Sigmoid colon (tissue), 7 donors: ENCODE measurements at regions of chr14 and their contacts with region 1.

Region 1: GRCh38 chr14:68816262-68816942 is 23.5 kb upstream of the ZFP36L1 start:
- DNase-seq: peak; percentile 96
- H3K4me3 ChIP-seq: peak overlapping the region; percentile 35 to 52 (median 50)
- H3K27ac ChIP-seq: peak overlapping the region; percentile 93 to 99 (median 96)
- H3K4me1 ChIP-seq: peaks cover 0 to 77% (median 69%) of the 10 kb centered on the region in 4 donors
- H3K27me3 ChIP-seq: no peaks in the 10 kb centered on the region
- CTCF ChIP-seq: peak; percentile 92 to 99 (median 98)
- EP300 ChIP-seq: peak in 1 of 4 donors; percentile 47
- POLR2A ChIP-seq: peak; percentile 15 to 38

Region 2: GRCh38 chr14:67883717-67884116 is 932.7 kb before region 1 on chr14:
- intact Hi-C with region 1: loop called (anchors 5 kb)
- DNase-seq: no peak
- H3K4me3 ChIP-seq: no peak overlapping the region
- H3K27ac ChIP-seq: no peak overlapping the region
- H3K4me1 ChIP-seq: peaks cover 0 to 7% (median 3%) of the 10 kb centered on the region in 4 donors
- H3K27me3 ChIP-seq: no peaks in the 10 kb centered on the region
- CTCF ChIP-seq: peak in 1 of 4 experiments; percentile 10
- EP300 ChIP-seq: no peak
- POLR2A ChIP-seq: no peak

Region 3: DNA sequence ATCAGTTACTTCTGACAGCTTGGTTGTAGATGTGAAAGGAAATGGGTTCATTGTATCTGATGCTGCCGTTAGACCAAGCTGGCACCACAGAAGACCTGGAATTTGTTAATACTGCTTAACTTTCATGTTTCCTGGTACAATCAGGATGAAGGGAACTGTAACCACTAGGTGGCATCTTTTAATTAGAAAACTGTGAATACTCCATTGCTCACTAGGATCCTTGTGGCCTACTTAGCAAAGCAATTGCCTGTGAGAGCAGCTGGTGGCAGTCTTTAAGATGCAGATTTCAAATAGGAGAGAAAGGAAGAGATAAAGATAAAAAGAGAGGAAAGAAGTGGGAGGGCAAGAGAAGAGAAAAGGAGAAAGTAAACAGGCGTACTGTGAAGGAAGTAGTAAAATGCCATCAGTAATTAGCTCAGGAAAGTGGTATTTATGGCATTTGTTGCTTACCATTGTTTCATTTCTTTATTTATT is 882.4 kb before region 1 on chr14:
- intact Hi-C with region 1: loop called (anchors 2 kb)
- DNase-seq: no peak
- H3K4me3 ChIP-seq: no peak overlapping the region
- H3K27ac ChIP-seq: peak overlapping the region; percentile 44 to 79 (median 66)
- H3K4me1 ChIP-seq: peaks cover 0 to 32% (median 17%) of the 10 kb centered on the region in 4 donors
- H3K27me3 ChIP-seq: no peaks in the 10 kb centered on the region
- CTCF ChIP-seq: peak; percentile 71 to 90 (median 86)
- EP300 ChIP-seq: no peak
- POLR2A ChIP-seq: no peak

Region 4: GRCh38 chr14:68039593-68039992 is 776.8 kb before region 1 on chr14:
- intact Hi-C with region 1: loop called (anchors 10 kb)
- DNase-seq: no peak
- H3K4me3 ChIP-seq: no peak overlapping the region
- H3K27ac ChIP-seq: peak overlapping the region; percentile 22 to 90 (median 85)
- H3K4me1 ChIP-seq: peaks cover 0 to 92% (median 61%) of the 10 kb centered on the region in 4 donors
- H3K27me3 ChIP-seq: no peaks in the 10 kb centered on the region
- CTCF ChIP-seq: no peak
- EP300 ChIP-seq: no peak
- POLR2A ChIP-seq: no peak

Region 5: DNA sequence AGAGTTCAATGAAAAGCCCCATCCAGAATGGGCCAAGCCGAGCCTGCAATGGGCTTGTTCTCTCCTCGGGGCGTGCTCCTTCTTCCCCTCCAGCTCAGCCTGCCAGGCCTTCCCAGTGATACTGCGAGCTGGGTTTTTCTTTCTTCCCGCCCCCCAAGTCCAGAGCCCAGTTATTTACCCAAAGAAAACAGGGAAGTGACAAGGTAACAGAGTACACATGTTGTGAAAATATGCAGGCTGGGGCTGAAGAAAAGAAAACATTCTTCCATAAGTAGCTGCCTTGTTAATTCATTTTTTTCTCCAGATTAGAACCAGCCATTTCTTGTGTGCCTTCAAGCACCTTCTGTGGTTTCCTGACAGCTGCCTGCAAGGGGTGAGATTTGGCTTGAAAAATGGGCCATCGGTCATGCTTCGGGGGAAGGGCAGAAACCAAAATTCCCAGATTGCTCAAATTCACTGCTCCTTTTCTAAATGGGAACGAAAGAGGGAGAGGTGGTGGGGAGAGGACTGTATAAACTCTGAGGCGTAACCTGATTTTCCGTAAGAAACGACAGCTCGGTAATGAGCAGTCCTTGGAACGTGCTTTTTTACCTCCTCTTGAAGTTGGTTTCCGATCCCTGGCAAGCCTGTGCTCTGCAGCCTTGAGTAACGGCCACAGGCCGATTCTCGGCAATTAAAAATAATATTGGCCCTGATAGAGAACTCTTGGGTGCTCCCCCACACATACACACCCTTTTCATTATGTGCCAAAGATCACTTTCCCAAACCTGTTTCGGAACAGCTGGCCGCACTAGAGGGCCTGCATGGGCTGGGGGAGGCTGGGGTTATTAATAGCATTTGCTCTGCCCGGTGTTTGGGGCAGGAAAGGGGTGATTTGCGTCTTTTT is 252.9 kb before region 1 on chr14:
- intact Hi-C with region 1: no loop called
- DNase-seq: no peak
- H3K4me3 ChIP-seq: no peak overlapping the region
- H3K27ac ChIP-seq: peak overlapping the region; percentile 56 to 63 (median 62)
- H3K4me1 ChIP-seq: peaks cover 0 to 44% (median 27%) of the 10 kb centered on the region in 4 donors
- H3K27me3 ChIP-seq: no peaks in the 10 kb centered on the region
- CTCF ChIP-seq: no peak
- EP300 ChIP-seq: no peak
- POLR2A ChIP-seq: no peak

Region 6: DNA sequence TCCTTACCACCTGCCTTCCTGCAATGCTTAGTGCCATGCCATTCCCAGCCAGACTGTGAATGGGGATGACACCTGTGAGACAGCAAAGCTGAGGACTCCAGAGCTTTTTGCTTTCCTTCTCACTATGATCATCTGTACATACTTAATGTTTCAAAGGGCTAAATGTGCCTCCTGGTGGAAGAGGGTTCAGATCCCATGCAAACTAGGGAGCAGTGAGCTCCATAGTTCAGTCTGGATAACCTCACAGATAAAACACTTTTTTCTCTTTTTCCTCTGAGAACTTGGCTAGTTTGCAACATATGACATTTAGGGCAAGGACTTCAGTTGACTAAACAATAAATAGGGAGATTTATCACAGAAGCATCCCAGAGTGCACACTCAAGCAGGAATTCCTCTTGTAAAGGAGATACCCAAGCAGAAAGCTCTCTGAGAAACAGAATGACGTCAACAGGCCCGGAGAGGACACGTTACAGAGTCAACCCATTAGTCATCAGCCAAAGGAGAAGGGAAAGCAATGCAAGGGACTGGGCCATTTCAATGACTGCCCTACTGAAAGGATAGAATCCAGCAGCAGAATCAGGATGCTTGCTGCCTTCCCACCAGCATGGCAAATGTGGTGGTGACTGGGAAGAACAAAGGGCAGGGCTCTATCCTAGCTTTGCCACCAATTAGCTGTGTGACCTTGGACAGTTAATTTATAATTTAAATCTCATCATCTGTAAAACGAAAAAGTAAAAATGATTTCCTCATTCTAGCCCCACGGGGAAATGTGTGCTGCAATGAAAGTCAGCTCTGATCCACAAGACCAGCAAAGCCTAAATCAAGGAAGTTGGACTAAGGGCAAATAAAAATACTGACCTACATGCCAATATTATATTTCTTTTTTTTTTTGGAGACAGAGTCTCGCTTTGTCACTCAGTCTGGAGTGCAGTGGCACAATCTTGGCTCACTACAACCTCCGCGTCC is 243.5 kb after region 1 on chr14:
- intact Hi-C with region 1: no loop called
- DNase-seq: peak; percentile 88
- H3K4me3 ChIP-seq: no peak overlapping the region
- H3K27ac ChIP-seq: peak overlapping the region; percentile 45 to 87 (median 80)
- H3K4me1 ChIP-seq: peaks cover 0 to 49% (median 36%) of the 10 kb centered on the region in 4 donors
- H3K27me3 ChIP-seq: no peaks in the 10 kb centered on the region
- CTCF ChIP-seq: peak in 1 of 4 experiments; percentile 26
- EP300 ChIP-seq: peak; percentile 25 to 90 (median 74)
- POLR2A ChIP-seq: no peak